ENCODE measurements at regions of chr19 and their contacts with region 1.

Region 1: DNA sequence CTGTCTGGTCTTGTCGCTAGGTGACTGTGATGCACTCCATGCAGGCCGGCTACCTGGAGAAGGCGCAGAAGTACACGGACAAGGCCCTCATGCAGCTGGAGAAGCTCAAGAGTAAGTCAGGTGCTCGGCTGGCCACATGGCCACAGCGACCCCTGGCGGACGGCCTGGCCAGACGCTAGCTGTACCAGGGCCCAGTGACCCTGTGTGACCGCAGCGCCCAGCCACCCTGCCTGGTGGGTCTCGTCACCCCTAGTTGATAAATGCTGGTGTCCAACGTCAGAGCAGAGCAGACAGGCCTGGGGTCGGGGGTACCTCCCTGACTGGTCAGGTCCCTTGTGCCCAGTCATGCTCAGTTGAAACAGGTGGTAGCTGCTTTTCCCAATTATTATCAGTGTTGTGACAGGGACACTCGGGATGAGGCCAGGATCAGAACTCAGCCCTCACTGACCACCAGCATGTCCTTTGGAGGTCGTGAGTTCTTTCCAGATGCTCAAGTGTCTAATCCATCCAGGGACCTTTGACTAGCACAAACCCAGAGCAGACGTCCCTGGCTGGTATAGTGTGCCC is 22.2 kb downstream of the MAU2 start:
- DNase-seq: peak; percentile 53
- H3K4me3 ChIP-seq: no peak overlapping the region
- H3K27ac ChIP-seq: no peak overlapping the region
- H3K4me1 ChIP-seq: peaks cover 11% of the 10 kb centered on the region
- H3K27me3 ChIP-seq: no peaks in the 10 kb centered on the region
- CTCF ChIP-seq: peak; percentile 85 to 96

Region 2: DNA sequence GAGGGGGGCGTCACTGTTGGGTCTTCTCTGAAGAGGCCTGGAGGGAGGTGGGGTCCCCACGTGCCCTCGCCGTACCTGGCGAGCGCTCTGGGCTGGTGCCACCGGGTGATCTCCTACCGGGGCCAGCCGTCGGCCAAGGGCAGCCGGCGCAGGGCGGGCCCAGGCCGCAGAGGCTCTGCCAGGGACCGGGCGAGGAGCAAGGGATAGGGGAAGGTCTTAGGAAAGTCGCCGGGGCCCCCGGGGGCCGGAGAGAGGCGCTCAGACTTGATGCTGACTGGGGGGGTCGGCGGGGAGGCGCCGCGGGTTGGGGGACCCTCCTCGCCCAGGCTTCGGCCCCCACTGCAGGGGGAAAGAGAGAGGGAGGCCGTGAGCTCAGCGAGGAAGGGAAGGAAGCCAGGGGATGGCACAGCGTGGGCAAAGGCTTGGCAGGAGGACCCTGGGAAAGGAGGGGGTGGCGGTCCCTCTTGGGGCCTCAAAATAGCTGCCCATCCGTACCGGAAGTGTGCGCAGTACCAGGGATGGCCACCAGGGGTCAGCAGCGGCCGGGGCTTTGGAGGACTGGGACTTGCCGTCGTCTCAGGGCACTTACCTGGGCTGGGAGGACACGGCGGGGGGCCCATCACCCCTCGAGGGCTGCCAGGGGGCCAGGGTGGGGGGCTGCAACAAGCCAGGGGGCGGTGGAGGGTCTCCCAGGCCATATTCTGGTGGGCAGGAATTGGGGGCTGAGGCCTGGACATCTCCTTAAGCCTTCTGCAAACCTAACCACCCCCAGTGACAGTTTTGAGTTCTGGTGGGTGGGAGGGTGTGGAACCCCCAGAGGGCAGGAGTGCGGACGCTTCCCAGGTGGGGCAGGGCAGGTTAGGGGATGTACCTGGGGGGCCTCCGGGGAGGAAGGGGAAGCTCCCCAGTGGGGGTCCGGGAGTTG is 196.9 kb before region 1 on chr19:
- CTCF ChIA-PET with region 1: no interaction called
- dilution Hi-C with region 1: no loop called
- in situ Hi-C with region 1: loop called in 1 of 2 experiments (anchors 25 kb)
- intact Hi-C with region 1: loop called (anchors 1 kb)
- DNase-seq: peak; percentile 42
- H3K4me3 ChIP-seq: peak overlapping the region in 2 of 3 experiments; percentile 20 to 29
- H3K27ac ChIP-seq: no peak overlapping the region
- H3K4me1 ChIP-seq: peaks cover 2% of the 10 kb centered on the region
- H3K27me3 ChIP-seq: no peaks in the 10 kb centered on the region
- CTCF ChIP-seq: peak; percentile 92 to 96

Region 3: DNA sequence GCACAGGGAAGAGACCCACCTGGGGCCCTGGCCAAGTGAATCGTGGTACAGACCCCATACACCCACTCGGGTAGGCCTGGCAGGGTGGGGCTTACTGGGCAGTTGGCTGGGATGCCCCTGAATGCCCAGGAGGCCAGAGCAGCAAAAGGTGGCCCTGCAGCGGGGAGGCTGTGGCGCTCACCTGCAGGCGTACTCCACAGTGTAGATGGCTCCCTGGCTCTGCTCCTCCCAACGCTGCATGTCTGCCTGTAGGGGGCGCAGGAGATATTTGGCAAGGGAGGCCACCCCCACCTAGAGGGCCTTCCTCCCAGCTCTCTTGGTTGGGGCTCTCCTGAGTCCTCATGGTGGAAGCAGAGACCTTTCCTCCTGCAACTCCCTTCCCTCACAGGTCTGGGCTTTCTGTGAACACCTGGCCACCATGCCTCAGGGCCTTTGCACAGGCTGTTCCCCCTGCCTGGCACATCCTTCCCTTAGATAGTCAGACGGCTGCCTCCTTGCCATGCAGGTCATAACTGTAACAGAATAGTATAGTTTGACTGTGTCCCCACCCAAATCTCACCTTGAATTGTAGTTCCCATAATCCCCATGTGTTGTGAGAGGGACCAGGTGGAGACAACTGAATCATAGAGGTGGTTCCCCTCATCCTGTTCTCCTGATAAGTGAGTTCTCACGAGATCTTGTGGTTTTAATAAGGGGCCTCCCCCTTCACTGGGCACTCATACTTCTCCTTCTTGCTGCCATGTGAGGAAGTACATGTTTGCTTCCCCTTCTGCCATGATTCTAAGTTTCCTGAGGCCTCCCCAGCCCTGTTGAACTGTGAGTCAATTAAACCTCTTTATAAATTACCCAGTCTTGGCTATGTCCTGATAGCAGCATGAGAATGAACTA is 156.7 kb before region 1 on chr19:
- CTCF ChIA-PET with region 1: no interaction called
- dilution Hi-C with region 1: no loop called
- in situ Hi-C with region 1: no loop called
- intact Hi-C with region 1: loop called (anchors 1 kb)
- DNase-seq: peak; percentile 25
- H3K4me3 ChIP-seq: no peak overlapping the region
- H3K27ac ChIP-seq: no peak overlapping the region
- H3K4me1 ChIP-seq: peaks cover 8% of the 10 kb centered on the region
- H3K27me3 ChIP-seq: no peaks in the 10 kb centered on the region
- CTCF ChIP-seq: peak; percentile 66 to 84

Region 4: GRCh38 chr19:19459707-19460251 is 116.9 kb after region 1 on chr19:
- CTCF ChIA-PET with region 1: no interaction called
- dilution Hi-C with region 1: loop called (anchors 5 kb)
- in situ Hi-C with region 1: no loop called
- intact Hi-C with region 1: no loop called
- DNase-seq: no peak
- H3K4me3 ChIP-seq: no peak overlapping the region
- H3K27ac ChIP-seq: no peak overlapping the region
- H3K4me1 ChIP-seq: peaks cover 54% of the 10 kb centered on the region
- H3K27me3 ChIP-seq: no peaks in the 10 kb centered on the region
- CTCF ChIP-seq: no peak